Activated CD4-positive, alpha-beta T cell treated with anti-CD3 and anti-CD28 coated beads, Interleukin-2, amount 10 ng/mL, durations not matched to agents 24 days and 14 days (primary cell): ENCODE measurements at regions of chr1 and their contacts with region 1.

Region 1: GRCh38 chr1:226407497-226408284 is at the start of gene PARP1:
- DNase-seq: peak; percentile 97
- H3K4me3 Mint-ChIP-seq: peak within 1 kb of the TSS; percentile 100
- H3K27ac Mint-ChIP-seq: peak within 1 kb of the TSS; percentile 98
- H3K4me1 Mint-ChIP-seq: peaks cover 37% of the 10 kb centered on the region
- H3K27me3 Mint-ChIP-seq: peaks cover 8% of the 10 kb centered on the region
- total RNA-seq, gene PARP1: 215 and 222 TPM in 2 replicates

Region 2: DNA sequence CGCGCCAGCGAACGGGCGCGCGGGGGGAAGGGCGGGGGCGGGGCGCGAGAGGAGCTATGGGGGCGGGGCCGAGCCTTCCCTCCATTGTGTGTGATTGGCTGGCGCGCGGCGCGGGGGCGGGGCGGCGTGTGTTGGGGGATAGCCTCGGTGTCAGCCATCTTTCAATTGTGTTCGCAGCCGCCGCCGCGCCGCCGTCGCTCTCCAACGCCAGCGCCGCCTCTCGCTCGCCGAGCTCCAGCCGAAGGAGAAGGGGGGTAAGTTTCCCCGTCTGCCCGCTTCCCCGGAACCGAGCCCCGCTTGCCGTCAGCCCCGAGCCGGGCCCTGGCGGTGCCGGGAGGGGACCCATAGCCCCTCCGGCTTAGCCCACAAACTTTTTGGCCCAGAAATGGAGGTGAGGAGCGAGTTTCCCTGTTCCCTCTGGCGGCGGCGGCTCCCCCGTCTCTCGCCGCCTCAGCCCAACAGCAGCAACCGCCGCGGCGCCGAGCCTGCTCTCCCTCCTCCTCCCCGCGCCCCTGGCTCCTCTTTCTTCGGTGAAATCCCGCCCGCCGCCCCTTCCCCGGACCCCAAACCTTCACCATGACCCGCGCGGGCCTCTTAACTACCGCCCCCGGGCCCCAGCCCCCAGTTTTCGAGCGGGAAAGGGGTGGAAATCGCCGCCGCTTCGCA is 345.0 kb before region 1 on chr1 and contains the start of gene H3-3A:
- intact Hi-C with region 1: loop called (anchors 2 kb)
- DNase-seq: peak; percentile 99
- H3K4me3 Mint-ChIP-seq: peak within 1 kb of the TSS; percentile 99
- H3K27ac Mint-ChIP-seq: peak within 1 kb of the TSS; percentile 99
- H3K4me1 Mint-ChIP-seq: peaks cover 31% of the 10 kb centered on the region
- H3K27me3 Mint-ChIP-seq: no peaks in the 10 kb centered on the region
- total RNA-seq, gene H3-3A: 390 and 391 TPM in 2 replicates

Region 3: DNA sequence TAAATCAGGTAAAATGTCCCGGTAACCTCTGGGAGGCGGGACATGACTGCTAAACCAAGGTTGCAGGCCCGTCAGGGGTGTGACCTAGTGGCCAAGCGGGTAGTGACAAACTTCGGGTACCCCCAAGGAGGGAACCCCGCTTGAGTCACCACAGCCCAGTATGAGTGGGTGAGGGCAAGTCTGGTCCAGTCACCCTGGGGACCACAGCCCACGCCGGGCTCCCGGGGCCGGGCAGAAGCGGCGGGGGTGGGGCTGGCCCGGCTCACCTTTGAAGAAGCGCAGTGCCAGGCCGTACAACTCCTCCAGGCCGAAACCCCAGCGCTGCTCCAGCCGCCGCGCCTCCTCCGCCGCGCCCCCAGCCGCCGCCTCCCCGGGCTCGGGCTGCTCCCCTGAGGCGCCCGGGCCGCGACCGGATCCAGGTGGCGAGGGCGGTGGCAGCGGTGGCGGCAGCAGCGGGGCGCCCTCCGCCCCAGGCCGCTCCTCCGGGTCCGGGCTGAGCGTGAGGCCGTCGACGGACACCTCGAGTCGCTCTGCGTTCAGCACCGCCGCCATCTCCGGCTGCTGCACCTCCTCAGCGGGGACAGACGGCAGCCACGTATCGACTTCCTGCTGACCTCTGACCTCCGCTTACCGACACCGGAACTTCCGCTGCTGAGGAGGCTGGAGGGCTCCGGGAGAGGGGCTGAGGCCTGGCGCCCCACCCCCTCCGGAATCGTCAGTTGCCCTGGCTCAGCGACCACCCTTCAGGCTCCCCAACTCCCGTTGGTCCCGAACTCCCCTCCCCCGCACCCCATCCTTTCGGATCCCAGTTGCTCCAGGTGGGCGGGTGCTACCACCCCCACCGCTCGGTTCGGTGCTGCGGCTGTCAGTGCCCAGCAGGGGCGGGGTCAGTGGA is 221.3 kb before region 1 on chr1 and contains the start of gene ACBD3:
- intact Hi-C with region 1: loop called (anchors 5 kb)
- DNase-seq: peak; percentile 96
- H3K4me3 Mint-ChIP-seq: peak within 1 kb of the TSS; percentile 97
- H3K27ac Mint-ChIP-seq: peak within 1 kb of the TSS; percentile 92
- H3K4me1 Mint-ChIP-seq: peaks cover 29% of the 10 kb centered on the region
- H3K27me3 Mint-ChIP-seq: no peaks in the 10 kb centered on the region
- total RNA-seq, gene ACBD3: 21.8 and 23.9 TPM in 2 replicates

Region 4: GRCh38 chr1:226370144-226370923 is 37.4 kb before region 1 on chr1:
- intact Hi-C with region 1: no loop called
- DNase-seq: no peak
- H3K4me3 Mint-ChIP-seq: no peak overlapping the region
- H3K27ac Mint-ChIP-seq: no peak overlapping the region
- H3K4me1 Mint-ChIP-seq: peaks cover 3% of the 10 kb centered on the region
- H3K27me3 Mint-ChIP-seq: no peaks in the 10 kb centered on the region

Region 5: GRCh38 chr1:226390326-226391080 is 17.2 kb before region 1 on chr1:
- intact Hi-C with region 1: loop called (anchors 2 kb)
- DNase-seq: no peak
- H3K4me3 Mint-ChIP-seq: no peak overlapping the region
- H3K27ac Mint-ChIP-seq: no peak overlapping the region
- H3K4me1 Mint-ChIP-seq: peaks cover 11% of the 10 kb centered on the region
- H3K27me3 Mint-ChIP-seq: no peaks in the 10 kb centered on the region

Region 6: DNA sequence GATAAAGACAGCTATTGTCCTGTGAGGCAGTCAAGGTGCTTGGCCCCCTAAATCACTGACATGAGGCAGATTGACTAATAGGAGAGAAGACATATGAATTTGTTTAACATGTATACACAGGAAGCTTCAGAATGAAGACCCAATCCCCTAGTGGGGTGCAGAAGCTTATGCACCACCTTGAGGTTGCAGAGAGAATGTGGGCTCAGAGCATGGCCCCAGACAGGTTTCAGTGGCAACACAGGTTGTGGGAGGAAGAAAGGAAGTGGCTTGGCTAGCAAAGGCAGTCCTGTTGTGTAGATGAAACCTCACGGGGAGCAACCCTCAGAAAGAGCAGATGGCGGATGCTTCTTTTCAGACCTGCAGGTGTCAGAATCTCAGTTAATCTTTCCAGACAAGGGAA is 37.2 kb after region 1 on chr1:
- intact Hi-C with region 1: loop called (anchors 1 kb)
- DNase-seq: peak; percentile 93
- H3K4me3 Mint-ChIP-seq: peak overlapping the region; percentile 19
- H3K27ac Mint-ChIP-seq: peak overlapping the region; percentile 15
- H3K4me1 Mint-ChIP-seq: peaks cover 25% of the 10 kb centered on the region
- H3K27me3 Mint-ChIP-seq: peaks cover 32% of the 10 kb centered on the region

Region 7: DNA sequence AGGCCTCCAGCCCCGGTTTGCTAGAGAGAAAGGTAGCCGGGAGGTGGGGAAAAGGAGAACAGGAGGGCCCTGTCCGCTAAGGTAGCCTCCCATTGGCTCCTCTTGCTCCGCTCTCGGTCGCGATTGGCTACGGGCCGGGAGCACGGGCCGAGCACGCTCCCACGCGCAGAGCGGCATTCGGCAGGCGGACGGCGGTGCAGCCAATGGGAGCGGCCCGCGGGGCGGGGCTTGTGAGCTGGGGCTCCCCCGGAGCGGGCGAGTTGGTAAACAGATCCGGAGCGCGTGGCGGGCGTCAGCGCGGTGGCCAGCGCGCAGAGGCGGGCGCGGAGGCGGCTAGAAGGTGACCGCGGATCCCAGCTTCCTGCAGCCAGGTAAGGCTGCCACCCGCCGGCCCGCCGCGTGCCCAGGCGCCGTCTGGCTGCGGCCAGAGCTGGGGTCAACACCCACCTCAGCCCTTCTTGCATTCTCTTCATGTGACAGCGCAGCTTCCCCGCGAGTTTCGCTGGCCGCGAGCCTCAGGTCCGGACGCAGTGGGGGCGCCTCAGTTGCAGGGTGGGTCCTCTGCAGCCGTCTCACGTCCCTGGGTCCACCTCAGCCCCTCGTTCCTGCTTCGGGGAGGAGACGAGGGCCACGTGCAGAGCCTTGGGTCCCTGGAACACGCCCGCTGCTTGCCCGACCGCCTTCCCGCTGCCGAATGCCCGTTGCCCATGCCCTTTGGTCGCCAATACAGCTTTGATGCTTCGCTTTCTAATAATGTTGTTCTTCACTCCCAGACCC is 532.5 kb after region 1 on chr1 and contains the start of gene COQ8A:
- intact Hi-C with region 1: loop called (anchors 5 kb)
- DNase-seq: peak; percentile 100
- H3K4me3 Mint-ChIP-seq: peak within 1 kb of the TSS; percentile 93
- H3K27ac Mint-ChIP-seq: peak within 1 kb of the TSS; percentile 99
- H3K4me1 Mint-ChIP-seq: peaks cover 42% of the 10 kb centered on the region
- H3K27me3 Mint-ChIP-seq: no peaks in the 10 kb centered on the region
- total RNA-seq, gene COQ8A: 27.0 and 35.3 TPM in 2 replicates